ENCODE measurements at regions of chr4 and their contacts with region 1.

Region 1: GRCh38 chr4:173494013-173494970 is 35.7 kb downstream of the HAND2 start:
- DNase-seq: peak; percentile 80
- CTCF ChIP-seq: peak; percentile 91

Region 2: DNA sequence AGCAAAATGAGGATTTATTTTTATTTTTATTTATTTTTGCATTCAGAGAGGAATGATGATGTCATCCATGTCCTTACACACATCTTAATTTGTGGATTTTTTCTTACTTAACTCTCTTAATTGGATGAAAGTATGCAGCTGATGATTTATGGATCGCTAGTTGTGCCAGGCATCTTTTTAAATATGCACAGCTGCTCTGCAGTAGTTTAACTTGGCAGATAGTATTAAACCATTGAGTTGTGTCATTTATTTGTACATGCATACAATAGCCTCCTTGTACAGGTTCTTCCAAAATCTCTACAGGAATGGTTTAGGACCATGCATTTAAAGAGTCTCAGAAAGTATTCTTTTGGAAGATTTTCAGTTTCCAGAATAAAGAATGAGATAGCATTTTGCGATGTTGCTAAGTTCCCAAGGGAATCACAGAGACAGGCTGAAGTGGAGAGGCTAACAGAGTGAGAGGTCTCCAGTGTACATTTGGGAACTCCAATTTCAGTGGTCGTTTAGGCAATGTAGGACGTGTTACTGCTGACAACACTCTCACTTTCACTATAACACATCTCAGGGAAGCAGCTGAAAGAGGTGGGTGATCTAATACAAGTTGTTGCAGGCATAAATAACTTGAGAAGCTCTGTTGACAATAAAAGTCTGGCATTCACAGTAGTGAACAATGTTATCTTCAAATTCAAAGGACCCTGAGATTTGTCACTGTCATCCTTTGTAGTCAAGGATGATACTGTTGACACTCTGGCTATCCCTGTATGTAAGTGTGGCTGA is 45.5 kb before region 1 on chr4:
- CTCF ChIA-PET with region 1: interaction called, 18 read pairs
- POLR2A ChIA-PET with region 1: no interaction called
- DNase-seq: peak; percentile 24
- CTCF ChIP-seq: no peak

Region 3: GRCh38 chr4:173565281-173565680 is 71.0 kb after region 1 on chr4:
- CTCF ChIA-PET with region 1: no interaction called
- POLR2A ChIA-PET with region 1: no interaction called
- DNase-seq: no peak
- CTCF ChIP-seq: no peak

Measured in GM10248 (cell line).